Activated naive CD4-positive, alpha-beta T cell treated with anti-CD3 and anti-CD28 coated beads for 36 hours (primary cell): ENCODE measurements at regions of chr2 and their contacts with region 1.

Region 1: DNA sequence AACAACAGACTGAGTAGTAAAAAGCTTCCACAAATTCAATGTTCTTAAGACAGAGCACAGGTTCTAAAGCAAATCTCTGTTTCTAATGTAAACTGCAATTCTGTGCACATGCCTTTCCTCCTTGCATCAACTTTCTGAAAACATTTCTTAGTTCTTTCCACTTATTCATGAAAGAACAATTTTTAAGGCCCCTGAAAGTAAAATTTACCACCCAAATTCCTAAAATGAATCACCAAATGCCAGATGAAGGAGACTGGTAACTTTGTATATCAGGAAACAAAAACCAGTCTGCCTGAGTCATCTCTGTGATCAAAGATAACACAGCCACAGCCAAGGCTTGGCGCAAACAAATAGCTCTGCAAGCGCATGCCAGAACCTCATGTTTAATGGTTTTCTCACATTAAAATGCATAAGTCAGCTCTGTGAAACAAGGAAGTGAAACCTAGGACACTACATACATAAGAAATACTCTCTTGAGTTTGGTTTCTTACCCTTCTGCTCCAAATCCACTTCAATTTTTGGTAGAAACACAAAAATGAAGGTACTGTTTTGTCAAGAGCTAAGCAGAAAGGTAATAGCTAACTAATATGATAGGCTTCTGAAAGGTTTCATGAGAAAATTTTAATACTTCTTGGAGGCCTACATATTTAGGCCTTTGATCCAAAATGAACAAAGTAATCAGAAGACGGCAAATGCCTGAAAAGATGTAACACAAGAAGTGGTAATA is 169.4 kb downstream of the THADA start:
- DNase-seq: peak; percentile 80
- H3K4me3 Mint-ChIP-seq: no peak overlapping the region
- H3K27ac Mint-ChIP-seq: peak overlapping the region; percentile 14
- H3K4me1 Mint-ChIP-seq: peaks cover 31% of the 10 kb centered on the region
- H3K27me3 Mint-ChIP-seq: no peaks in the 10 kb centered on the region

Region 2: GRCh38 chr2:43239981-43240761 is 186.3 kb before region 1 on chr2:
- CTCF ChIA-PET with region 1: no interaction called
- intact Hi-C with region 1: no loop called
- DNase-seq: no peak
- H3K4me3 Mint-ChIP-seq: no peak overlapping the region
- H3K27ac Mint-ChIP-seq: no peak overlapping the region
- H3K4me1 Mint-ChIP-seq: peaks cover 8% of the 10 kb centered on the region
- H3K27me3 Mint-ChIP-seq: no peaks in the 10 kb centered on the region

Region 3: GRCh38 chr2:43387092-43388062 is 39.1 kb before region 1 on chr2:
- CTCF ChIA-PET with region 1: interaction called, 4 read pairs
- intact Hi-C with region 1: loop called (anchors 1 kb)
- DNase-seq: no peak
- H3K4me3 Mint-ChIP-seq: no peak overlapping the region
- H3K27ac Mint-ChIP-seq: no peak overlapping the region
- H3K4me1 Mint-ChIP-seq: peaks cover 19% of the 10 kb centered on the region
- H3K27me3 Mint-ChIP-seq: no peaks in the 10 kb centered on the region